A549 (cell line): ENCODE measurements at regions of chr1 and their contacts with region 1.

Region 1: DNA sequence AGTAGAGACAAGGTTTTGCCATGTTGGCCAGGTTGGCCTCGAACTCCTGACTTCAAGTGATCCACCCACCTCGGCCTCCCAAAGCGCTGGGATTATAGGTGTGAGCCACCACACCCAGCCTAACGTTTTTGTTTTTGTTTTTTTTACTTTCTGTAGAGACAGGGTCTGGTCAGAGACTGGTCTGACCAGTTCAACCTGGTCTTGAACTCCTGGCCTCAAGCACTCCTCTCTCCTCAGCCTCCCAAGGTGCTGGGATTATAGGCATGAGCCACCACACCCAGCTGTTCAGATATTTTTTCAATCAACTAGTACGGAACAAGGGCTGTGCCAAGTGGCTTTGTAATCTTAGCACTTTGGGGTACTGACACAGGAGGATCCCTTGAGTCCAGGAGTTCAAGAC is 209.5 kb downstream of the RERE start:
- DNase-seq: no peak
- ATAC-seq: no peak
- H3K4me3 ChIP-seq: no peak overlapping the region
- H3K27ac ChIP-seq: no peak overlapping the region
- H3K4me1 ChIP-seq: peaks cover 18% of the 10 kb centered on the region; the same call in 2 of the 3 replicates
- CTCF ChIP-seq: no peak
- EP300 ChIP-seq: no peak
- POLR2A ChIP-seq: no peak
- RAD21 ChIP-seq: no peak

Region 2: DNA sequence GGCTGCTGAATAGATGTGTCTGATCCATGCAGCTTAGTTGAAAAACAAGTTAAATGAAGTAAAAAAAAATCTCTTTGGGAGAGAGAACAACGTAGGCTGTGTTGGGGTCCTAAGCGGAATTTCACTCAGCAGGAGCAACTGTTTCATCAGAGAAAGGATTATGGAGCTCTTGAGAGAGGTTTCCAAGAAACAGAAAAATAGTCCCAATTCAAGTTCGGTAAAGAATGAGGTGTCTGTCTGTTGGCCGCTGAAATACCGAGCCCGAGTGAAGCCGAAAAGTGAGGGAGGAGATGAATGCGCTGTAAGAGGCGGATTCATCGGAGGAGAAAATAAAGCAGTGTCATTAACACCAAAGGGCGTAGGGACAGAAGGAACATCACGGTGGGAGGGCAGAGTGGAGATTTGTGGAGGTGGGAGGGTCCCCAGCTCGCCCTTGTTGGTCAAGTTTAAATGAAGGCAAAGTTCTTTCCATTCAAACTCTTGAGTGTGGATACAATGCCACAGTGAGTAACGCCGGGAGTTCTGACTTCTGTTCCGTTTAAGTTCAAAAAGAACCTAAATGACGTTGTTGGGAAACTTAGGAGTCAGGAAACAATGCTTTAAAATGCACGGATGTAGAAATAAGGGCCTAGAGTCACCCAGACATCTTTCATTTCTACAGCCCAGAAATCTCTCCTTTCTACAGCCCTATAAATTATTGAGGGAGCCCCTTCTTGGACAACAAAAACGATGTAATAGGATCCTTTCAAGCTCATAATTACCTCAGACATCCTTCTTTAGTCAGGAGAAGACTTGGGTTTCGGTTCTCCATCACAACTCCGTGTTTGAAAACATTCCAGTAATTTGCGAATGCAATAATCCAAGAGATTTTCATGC is 305.6 kb before region 1 on chr1:
- CTCF ChIA-PET with region 1: no interaction called
- POLR2A ChIA-PET with region 1: interaction called, 11 read pairs
- DNase-seq: no peak
- ATAC-seq: no peak; a peak in 1 of 6 replicates
- H3K4me3 ChIP-seq: no peak overlapping the region
- H3K27ac ChIP-seq: 0 out of 6 replicates have a peak overlapping the region, but pooled peaks of 1 of the 2 experiments have one; percentile 4
- H3K4me1 ChIP-seq: no peaks in the 10 kb centered on the region
- CTCF ChIP-seq: no peak
- EP300 ChIP-seq: no peak
- POLR2A ChIP-seq: no peak
- RAD21 ChIP-seq: no peak

Region 3: DNA sequence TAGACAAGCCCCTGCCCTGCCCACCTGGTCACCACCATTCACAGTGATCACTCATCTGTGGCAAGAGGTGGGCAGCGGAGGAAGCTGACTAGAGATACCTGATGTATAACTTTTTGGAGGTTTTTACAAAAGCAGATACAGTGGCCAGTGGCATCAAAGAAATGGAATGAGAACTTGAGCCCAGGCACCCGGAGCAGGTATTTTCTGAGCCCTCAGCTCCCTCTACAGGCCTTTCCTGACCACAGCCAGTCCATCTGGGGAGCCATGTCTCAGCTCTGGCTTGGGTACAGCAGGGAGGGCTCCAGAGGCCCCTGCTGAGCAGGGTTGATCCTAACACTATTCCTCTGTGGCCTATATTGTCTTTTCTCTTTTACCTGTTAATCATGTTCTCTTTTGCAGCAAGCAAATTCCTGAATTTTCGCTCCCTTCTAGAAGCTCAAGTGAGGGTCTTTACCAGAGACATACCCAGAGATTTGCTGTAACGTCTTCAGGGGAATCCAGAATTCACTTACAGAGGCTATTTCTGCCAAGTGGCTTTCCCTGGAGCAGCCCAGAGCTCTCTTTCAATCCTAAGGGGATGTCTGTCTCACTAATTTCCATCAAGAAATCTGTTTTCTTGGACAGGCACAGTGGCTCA is 493.7 kb after region 1 on chr1:
- CTCF ChIA-PET with region 1: no interaction called
- POLR2A ChIA-PET with region 1: no interaction called
- DNase-seq: peak; percentile 51 to 58
- ATAC-seq: peak; percentile 95 to 96
- H3K4me3 ChIP-seq: no peak overlapping the region
- H3K27ac ChIP-seq: no peak overlapping the region
- H3K4me1 ChIP-seq: no peaks in the 10 kb centered on the region
- CTCF ChIP-seq: peak; percentile 59
- EP300 ChIP-seq: no peak
- POLR2A ChIP-seq: no peak
- RAD21 ChIP-seq: peak; percentile 67 to 70